Dorsolateral prefrontal cortex (tissue), 120 donors: ENCODE measurements at regions of chr20 and their contacts with region 1.

Region 1: DNA sequence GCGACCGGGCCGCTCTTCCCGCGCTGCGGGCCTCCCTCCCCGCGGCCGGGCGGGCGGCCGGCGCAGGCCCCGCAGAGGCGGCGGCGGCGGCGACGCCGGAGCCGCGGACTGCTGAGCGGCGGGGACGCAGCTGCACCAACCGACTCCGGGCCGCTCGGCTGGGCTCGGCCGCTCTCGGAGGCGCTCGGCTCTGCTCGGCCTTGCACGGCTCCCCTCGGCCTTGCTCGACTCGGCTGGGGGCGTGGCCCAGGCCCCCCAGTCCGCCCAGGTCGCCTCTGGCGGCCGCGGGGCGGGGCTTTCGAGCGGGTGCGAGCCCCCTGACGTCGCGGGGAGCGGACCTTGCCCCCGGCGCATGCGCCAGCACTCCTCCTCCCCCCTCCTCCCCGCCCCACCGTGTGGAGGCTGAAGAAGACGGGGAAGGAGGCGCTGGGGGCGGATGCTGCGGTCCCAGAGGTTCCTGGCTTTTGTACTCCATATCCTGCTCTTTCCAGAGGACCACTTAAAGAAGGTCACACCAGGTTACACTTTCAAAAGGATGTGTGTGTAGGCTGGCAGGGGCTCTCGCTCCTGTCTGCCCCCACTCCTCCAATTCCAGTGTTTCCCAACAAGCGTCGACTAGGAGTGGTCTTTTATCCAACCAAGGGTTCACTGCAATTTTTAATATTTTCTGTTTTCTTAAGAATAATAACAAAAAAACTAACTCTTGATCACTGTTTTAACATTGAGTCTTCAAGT is at the start of gene ZHX3:
- DNase-seq: peak; percentile 88 to 98 (median 94)
- H3K4me3 ChIP-seq: peak within 1 kb of the TSS; percentile 61 to 96 (median 84)
- H3K27ac ChIP-seq: peak within 1 kb of the TSS; percentile 66 to 97 (median 92)
- H3K27me3 ChIP-seq: no peaks in the 10 kb centered on the region
- CTCF ChIP-seq: peak in 30 of 56 donors; percentile 5 to 43 (median 23)
- total RNA-seq, gene ZHX3: 73.6 to 239 (median 112) TPM

Region 2: GRCh38 chr20:40706977-40707582 is 610.6 kb before region 1 on chr20:
- intact Hi-C with region 1: no loop called
- DNase-seq: no peak
- H3K4me3 ChIP-seq: no peak overlapping the region
- H3K27ac ChIP-seq: no peak overlapping the region
- H3K27me3 ChIP-seq: peaks cover 0 to 29% (median 6%) of the 10 kb centered on the region in 45 donors
- CTCF ChIP-seq: peak in 1 of 56 donors; percentile 6

Region 3: DNA sequence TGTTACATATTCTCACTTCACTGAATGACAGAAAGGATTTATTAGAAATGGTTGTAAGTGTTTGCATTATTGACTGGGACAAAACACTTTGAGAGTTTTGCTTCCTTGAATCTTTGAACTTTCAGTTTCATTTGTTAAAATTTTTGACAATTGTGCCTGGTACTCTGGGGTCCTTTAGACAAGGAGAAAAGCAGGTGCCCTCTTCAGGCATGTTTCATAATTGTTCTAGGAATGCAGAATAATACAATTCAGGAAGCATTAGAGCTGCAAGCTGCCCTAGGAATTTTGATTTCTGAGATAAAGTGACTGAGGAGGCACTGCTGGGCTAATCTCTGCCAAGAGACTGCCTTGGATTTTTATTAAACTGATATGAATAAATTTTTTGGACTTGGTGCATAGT is 239.4 kb before region 1 on chr20:
- intact Hi-C with region 1: no loop called
- DNase-seq: no peak
- H3K4me3 ChIP-seq: peak overlapping the region in 1 of 59 donors; percentile 25
- H3K27ac ChIP-seq: peak overlapping the region in 18 of 59 donors; percentile 3 to 69 (median 26)
- H3K27me3 ChIP-seq: no peaks in the 10 kb centered on the region
- CTCF ChIP-seq: peak in 47 of 56 donors; percentile 11 to 64 (median 38)

Region 4: DNA sequence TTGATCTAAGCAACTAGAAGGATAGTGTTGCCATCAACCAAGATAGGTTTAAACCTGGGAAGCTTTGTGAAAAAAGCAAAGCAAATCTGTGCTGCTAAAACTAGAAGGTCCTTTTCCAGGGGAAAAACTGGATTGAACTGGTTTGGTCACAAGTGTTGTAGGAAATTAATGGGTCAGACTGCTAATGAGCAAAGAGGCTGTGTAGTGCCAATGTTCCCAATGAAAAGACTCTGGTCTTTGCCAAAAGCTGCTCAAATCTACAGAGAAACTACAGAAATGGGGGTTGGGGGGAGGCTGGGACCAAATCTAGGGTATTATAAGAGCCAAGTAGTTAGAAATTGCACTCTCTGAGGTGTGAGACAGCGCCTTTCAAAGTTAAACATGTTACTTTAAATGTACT is 95.4 kb before region 1 on chr20:
- intact Hi-C with region 1: loop called in 1 of 2 experiments (anchors 5 kb)
- DNase-seq: peak in 1 of 10 donors; percentile 70
- H3K4me3 ChIP-seq: peak overlapping the region in 9 of 59 donors; percentile 4 to 35 (median 12)
- H3K27ac ChIP-seq: peak overlapping the region; percentile 72 to 100 (median 97)
- H3K27me3 ChIP-seq: no peaks in the 10 kb centered on the region
- CTCF ChIP-seq: no peak

Region 5: DNA sequence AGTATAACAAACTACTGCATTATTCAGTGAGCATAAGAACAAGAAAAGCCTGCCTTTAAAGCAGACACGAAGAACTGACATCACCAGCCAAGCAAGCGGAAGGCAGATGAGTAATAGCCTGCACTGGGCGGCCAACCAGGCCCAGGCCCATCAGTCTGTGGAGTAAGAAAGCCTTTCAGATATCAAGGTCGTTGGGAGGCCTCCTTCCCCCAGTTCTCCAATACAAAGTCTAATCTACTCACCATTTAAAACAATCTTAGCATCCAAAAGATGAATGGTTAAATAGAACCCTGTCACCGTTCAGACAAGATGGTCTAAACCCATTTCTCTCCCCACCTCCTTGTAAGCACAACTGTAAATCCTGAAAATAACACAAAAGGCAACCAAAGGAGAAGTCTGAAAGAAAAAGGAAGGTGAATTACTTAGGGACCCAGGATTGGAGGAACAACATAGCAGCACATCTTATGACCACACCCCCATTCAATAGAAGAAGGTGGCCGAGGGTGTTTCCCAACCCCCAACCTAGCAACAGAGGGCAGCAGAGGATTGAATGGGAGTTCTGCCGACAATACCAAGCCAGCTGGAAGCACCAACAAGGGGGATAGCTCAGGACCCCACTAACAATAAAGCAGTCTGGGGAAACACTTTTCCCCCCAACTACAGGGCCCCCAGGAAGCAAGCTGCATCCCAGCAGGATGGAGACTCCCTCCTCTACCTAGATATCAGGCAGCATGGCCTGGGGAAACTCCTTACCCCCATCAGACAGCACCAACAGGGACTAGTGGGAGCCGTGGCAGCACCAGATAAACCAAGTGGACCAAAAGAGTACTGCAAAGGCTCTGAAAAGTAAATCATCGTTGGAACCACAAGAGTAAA is 68.1 kb before region 1 on chr20:
- intact Hi-C with region 1: loop called (anchors 2 to 10 kb)
- DNase-seq: peak in 9 of 10 donors; percentile 53 to 86 (median 72)
- H3K4me3 ChIP-seq: peak overlapping the region in 4 of 59 donors; percentile 8 to 14 (median 13)
- H3K27ac ChIP-seq: peak overlapping the region; percentile 80 to 99 (median 95)
- H3K27me3 ChIP-seq: no peaks in the 10 kb centered on the region
- CTCF ChIP-seq: peak in 51 of 56 donors; percentile 23 to 74 (median 50)

Region 6: GRCh38 chr20:41395667-41396664 is 78.3 kb after region 1 on chr20:
- intact Hi-C with region 1: no loop called
- DNase-seq: no peak
- H3K4me3 ChIP-seq: no peak overlapping the region
- H3K27ac ChIP-seq: peak overlapping the region in 27 of 59 donors; percentile 10 to 92 (median 41)
- H3K27me3 ChIP-seq: no peaks in the 10 kb centered on the region
- CTCF ChIP-seq: no peak

Region 7: GRCh38 chr20:41693136-41693979 is 375.7 kb after region 1 on chr20:
- intact Hi-C with region 1: loop called in 1 of 2 experiments (anchors 10 kb)
- DNase-seq: peak; percentile 56 to 88 (median 82)
- H3K4me3 ChIP-seq: peak overlapping the region; percentile 60 to 97 (median 84)
- H3K27ac ChIP-seq: peak overlapping the region; percentile 76 to 99 (median 94)
- H3K27me3 ChIP-seq: no peaks in the 10 kb centered on the region
- CTCF ChIP-seq: peak; percentile 34 to 72 (median 58)